HEK293T (cell line): ENCODE measurements at regions of chr10 and their contacts with region 1.

Region 1: GRCh38 chr10:125995726-125996304 is 99.5 kb downstream of the FANK1 start:
- DNase-seq: no peak

Region 2: GRCh38 chr10:125976960-125977603 is 18.7 kb before region 1 on chr10:
- CTCF ChIA-PET with region 1: interaction called, 15 read pairs
- POLR2A ChIA-PET with region 1: no interaction called
- DNase-seq: no peak